Lower leg skin (tissue), 4 donors: ENCODE measurements at regions of chr17 and their contacts with region 1.

Region 1: GRCh38 chr17:2244545-2245525 is 58.8 kb downstream of the SMG6 start:
- DNase-seq: peak; percentile 88 to 97
- H3K4me3 ChIP-seq: no peak overlapping the region
- CTCF ChIP-seq: peak in 2 of 3 donors; percentile 66 to 86
- POLR2A ChIP-seq: no peak

Region 2: DNA sequence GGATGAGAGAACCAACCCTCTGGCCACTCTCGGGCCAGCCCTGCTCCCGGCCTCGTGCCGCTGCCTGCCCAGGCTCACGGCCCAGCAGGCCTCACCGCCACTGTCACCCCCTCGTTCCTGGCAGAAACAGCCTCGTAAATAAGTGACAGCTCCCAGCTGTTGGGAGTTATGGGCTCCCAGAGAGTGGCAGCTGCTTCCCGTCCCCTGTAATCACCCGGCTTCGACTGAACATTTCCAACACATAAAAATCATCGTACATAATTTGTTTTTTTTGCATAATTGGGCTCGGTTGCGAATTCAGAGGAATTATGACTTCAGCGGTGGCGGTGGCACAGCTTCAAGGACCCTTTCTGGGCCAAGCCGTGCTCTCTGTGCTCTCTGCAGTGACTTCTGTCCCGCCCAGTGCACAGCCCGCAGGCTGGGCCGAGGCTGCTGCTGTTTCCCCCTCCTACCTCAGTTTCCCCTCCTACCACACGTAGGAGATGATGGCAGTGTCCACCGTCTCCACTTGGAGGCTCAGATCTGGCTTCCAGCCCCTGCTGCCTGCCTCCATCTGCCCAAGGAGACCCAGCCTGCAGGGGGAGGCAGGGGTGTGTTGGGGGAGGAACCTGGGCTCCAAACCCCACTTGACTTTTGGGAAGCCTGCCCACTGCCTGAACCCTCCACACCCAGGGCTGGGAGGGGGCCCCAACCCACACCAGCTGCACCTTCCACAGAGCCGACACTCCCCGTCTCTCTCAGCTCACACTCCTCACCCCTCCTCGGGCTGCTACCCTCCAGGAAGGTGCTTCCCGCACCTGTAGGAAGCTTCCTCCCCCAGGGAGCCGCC is 304.6 kb before region 1 on chr17:
- intact Hi-C with region 1: no loop called
- DNase-seq: no peak
- H3K4me3 ChIP-seq: no peak overlapping the region
- CTCF ChIP-seq: no peak
- POLR2A ChIP-seq: no peak

Region 3: GRCh38 chr17:2064980-2065785 is 179.7 kb before region 1 on chr17:
- intact Hi-C with region 1: loop called (anchors 5 kb)
- DNase-seq: no peak
- H3K4me3 ChIP-seq: no peak overlapping the region
- CTCF ChIP-seq: no peak
- POLR2A ChIP-seq: no peak

Region 4: DNA sequence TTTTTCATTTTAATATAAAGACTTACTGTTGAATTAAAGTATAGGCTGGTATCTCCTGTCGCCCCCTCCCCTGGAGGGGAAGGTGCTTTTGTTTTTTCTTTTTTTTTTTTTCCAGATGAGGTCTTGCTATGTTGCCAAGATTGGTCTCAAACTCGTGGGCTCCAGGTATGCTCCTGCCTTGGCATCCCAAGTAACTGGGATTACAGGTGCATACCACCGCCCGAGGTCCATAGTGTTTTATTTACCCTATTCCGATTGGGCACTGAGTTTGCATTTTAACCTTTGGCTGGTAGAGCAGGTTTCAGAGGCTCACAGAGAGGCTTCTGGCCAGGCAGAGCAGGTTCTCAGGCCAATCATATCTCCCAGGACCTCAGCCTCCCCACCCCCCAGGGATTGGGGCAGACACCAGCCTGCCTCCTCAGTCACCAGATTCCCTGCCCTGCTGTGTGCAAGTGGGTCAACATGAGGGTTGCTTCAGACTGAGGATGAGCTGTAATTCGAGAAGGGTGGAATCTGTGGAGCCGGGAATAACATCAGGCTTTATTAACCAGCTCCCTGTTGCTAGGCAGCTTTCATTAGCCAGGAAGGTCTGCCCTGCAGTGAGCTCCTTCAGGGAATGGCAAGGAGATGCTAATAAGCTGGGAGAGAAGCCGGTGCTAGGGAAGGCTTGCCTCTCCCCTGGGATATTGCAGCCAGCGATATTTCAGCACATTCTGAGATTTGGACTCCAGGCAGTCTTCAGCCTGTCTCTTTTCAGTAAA is 102.9 kb after region 1 on chr17:
- intact Hi-C with region 1: no loop called
- DNase-seq: peak in 1 of 2 donors; percentile 81
- H3K4me3 ChIP-seq: no peak overlapping the region
- CTCF ChIP-seq: no peak
- POLR2A ChIP-seq: no peak